ENCODE measurements at regions of chr3 and their contacts with region 1.

Region 1: DNA sequence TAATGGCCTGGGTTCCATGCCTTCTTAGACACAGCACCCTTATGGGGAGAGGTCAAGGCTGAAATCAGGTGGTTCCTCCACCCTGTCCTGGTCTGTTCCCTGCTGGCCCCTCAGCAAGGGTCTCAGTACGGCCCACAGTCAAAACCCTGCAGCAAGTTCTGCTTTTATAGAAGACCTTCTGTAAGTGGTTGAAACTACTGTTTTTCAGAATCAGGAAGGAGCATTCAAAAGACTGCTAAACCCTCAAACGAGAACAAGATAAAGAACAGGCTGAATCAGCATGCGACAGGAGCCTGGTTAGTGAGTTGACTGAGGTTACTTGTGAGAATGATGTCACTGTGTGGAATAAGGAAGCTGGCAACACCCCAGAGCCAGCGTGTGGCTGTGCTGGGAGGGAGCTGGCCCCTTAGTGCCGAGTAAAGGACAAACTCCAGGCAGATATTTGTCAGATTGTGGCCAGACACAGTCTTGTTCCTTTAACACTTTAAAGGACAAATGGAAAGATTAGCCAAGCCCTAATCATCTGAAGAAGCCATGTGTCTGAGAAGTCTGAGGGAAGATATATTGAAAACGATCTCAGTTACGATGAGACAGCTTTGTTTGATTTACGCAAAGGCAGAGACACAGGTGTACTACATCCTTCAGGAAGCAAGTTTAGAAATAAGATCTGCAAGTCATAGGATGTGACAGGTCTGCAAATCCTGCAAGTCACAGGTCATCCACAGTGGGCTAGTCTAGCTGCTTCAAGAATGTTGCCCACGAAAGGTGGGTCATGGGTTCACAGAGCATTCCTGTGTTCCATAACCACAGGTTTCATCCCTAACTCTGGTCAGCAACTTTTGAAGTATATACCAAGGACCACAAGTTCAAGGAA is 54.0 kb downstream of the B3GNT5 start:
- H3K4me3 Mint-ChIP-seq: peak overlapping the region; percentile 26
- H3K27ac Mint-ChIP-seq: peak overlapping the region; percentile 89
- H3K4me1 Mint-ChIP-seq: peaks cover 75% of the 10 kb centered on the region
- H3K27me3 Mint-ChIP-seq: no peaks in the 10 kb centered on the region

Region 2: DNA sequence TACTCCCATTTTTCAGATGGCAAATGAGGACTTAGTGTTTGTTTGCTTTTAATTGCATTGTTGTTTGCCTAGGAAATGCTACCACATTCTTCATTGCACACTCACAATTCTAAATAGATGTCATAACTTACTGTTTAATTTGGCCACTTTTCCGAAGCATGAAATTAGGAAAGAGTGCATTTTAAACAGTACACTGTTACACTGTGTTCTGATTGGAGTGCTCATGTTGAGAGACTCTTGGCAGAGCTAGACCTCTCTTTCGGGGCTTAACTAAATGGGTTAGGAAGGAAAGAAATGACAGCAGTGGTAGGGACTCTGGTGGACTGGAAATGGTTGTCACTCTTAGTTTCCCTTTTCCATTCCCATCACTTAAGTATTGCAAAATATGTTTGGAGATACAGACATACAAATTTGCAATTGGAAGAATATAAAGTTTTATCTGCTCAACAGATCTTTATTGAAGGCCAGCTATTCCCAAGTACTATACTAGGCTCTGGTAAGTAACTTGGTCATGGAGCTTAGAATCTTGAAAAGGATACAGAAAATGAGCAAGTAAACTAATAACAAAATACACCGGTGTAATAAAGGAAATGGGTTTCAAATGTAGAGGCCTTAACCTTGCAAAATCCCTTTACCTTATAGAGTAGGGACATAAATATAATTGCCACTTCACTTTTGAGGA is 416.9 kb before region 1 on chr3:
- intact Hi-C with region 1: no loop called
- H3K4me3 Mint-ChIP-seq: no peak overlapping the region
- H3K27ac Mint-ChIP-seq: no peak overlapping the region
- H3K4me1 Mint-ChIP-seq: peaks cover 9% of the 10 kb centered on the region
- H3K27me3 Mint-ChIP-seq: no peaks in the 10 kb centered on the region

Region 3: GRCh38 chr3:183275418-183275817 is 31.6 kb before region 1 on chr3:
- intact Hi-C with region 1: loop called (anchors 5 kb)
- H3K4me3 Mint-ChIP-seq: peak overlapping the region; percentile 17
- H3K27ac Mint-ChIP-seq: peak overlapping the region; percentile 73
- H3K4me1 Mint-ChIP-seq: peaks cover 36% of the 10 kb centered on the region
- H3K27me3 Mint-ChIP-seq: no peaks in the 10 kb centered on the region

Region 4: DNA sequence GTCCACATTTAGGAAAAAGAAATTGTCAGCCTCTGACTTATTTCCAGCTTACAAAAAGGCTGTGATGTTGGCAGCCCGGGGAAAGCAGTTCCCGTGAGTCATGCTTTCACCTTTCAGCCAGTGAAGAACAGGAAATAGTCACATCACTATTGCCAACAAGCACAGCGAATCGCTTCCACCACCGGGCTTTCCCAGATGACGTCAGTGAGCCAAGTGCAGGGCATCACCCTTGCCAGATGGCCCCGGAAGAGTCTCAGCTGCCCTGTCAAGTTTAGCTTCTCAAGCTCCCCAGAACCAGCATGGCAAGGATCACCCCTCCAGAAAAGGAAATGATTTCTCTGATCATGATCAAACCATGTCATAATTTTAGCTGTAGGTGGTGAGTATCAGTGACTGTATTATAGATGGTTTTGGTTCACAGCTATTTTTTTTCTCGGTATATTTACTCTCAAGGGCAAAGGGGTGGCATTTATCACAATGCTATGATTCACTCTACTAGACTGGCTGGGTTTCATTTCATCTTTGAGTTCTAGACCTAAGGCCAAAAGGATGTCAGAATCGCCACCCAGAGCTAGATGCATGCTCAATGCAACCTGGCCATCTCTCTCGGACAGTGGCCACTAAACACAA is 21.1 kb before region 1 on chr3:
- intact Hi-C with region 1: loop called (anchors 2 kb)
- H3K4me3 Mint-ChIP-seq: peak overlapping the region; percentile 6
- H3K27ac Mint-ChIP-seq: peak overlapping the region; percentile 82
- H3K4me1 Mint-ChIP-seq: peaks cover 38% of the 10 kb centered on the region
- H3K27me3 Mint-ChIP-seq: no peaks in the 10 kb centered on the region

Region 5: DNA sequence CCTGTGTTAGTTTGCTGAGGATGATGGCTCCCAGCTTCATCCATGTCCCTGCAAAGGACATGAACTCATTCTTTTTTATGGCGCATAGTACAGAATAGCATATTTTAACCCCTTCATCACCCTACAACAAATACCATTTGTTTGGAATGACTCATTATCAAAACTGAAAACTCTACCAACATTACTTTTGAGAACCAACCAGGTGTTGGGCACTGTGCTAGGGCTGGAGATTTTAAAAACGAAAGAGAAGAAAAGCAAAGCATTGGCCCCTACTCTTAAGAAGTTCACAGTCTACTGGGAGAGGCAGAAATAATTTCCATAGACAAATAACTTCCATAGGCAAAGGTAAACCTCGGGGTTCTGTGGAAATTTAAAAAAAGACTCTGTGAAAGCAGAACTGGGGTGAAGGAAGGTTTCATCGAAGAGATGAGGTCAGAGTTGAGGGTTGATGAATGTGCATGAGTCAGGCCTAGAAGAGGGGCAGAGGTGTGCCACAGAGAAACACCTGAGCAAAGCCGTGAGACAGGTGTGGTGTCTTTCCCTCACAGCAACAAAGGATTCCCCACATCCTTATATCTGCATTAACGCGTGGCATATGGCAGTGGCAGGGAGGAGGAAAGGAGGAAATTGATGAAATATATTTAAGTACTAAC is 70.4 kb after region 1 on chr3:
- intact Hi-C with region 1: loop called (anchors 5 kb)
- H3K4me3 Mint-ChIP-seq: peak overlapping the region; percentile 11
- H3K27ac Mint-ChIP-seq: peak overlapping the region; percentile 43
- H3K4me1 Mint-ChIP-seq: peaks cover 75% of the 10 kb centered on the region
- H3K27me3 Mint-ChIP-seq: peaks cover 17% of the 10 kb centered on the region

Region 6: DNA sequence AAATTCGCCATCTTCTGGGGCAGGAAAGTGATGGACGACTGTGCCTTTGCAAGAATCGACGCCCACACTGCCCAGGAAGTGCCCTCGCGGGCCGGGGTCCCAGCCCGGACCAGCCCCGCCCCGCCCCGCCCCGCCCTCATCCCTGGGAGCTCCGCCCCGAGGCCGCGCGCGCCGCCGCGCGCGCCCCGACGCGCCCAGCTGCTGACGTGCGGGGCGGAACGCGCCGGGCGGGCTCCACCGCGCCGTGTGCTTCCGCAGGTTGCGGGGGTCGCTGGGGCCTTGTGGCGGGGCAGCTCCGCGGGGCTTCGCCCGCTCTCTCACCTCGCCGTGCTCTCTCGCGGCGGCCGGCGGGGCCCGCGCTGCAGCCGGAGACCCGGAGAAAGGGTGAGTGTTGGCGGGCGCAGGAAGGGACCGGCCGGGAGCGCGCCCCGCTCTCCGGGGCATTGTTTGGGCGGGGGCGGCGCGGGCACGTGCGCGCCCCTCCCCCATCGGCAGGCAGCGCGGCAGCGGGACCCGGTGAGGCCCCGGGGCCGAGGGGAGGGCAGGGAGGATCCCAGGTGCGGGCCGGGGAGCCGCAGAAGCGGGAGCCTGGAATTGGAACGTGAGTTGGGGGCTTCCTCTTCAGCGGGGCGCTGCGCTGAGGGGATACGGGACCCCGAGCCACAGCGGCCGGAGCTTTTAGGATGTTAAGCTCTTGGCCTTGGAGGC is 390.7 kb after region 1 on chr3 and contains the start of gene YEATS2:
- intact Hi-C with region 1: no loop called
- H3K4me3 Mint-ChIP-seq: peak within 1 kb of the TSS; percentile 79
- H3K27ac Mint-ChIP-seq: peak within 1 kb of the TSS; percentile 85
- H3K4me1 Mint-ChIP-seq: peaks cover 38% of the 10 kb centered on the region
- H3K27me3 Mint-ChIP-seq: peaks cover 4% of the 10 kb centered on the region

Measured in dendritic cell treated with granulocyte-macrophage colony-stimulating factor and Interleukin-4, amounts not matched to agents 40 ng/mL and 50 ng/mL, for 4 days (primary cell).